Dendritic cell treated with granulocyte-macrophage colony-stimulating factor and Interleukin-4, amounts not matched to agents 40 ng/mL and 50 ng/mL, for 4 days (primary cell): ENCODE measurements at regions of chr3 and their contacts with region 1.

Region 1: GRCh38 chr3:33636125-33636850 is 81.8 kb downstream of the CLASP2 start:
- H3K4me3 Mint-ChIP-seq: no peak overlapping the region
- H3K27ac Mint-ChIP-seq: no peak overlapping the region
- H3K4me1 Mint-ChIP-seq: no peaks in the 10 kb centered on the region
- H3K27me3 Mint-ChIP-seq: no peaks in the 10 kb centered on the region

Region 2: DNA sequence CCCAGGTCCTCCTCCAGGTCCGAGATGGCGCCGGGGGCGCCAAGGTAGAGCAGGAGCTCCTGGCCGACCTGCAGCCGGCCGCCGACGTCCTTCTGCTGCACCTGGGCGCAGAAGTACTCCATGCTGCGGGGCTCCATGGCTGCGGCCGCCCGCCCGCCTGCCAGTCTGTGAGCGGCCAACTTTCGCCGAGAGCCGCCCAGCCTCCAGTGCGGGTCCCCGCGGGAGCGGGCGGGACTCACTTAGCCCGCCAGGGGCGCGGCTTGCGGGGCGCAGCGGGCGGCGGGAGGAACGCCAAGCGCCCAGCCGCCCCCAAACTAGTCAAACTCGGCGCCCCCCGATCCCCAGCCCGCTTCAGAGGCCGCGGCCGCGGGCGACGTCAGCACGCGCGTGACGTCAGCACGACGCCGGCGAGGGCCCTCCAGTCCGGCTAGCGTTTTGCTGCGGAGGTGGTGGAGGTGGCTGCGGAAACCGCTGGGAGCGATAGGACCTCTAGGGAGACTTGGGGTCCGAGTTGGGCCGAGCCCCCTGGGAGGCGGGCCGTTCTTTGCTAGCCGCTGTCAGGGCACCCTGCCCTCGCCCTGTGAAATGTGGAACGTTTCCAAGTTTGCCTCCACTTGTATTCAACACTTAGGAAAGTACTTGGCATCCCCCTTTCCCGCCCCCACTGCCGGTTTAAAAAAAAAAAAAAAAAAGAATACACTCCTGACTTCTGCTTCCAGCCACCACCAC is 81.7 kb after region 1 on chr3 and contains the start of gene CLASP2:
- intact Hi-C with region 1: loop called (anchors 5 kb)
- H3K4me3 Mint-ChIP-seq: peak within 1 kb of the TSS; percentile 97
- H3K27ac Mint-ChIP-seq: no peak within 1 kb of the TSS
- H3K4me1 Mint-ChIP-seq: peaks cover 6% of the 10 kb centered on the region
- H3K27me3 Mint-ChIP-seq: no peaks in the 10 kb centered on the region

Region 3: GRCh38 chr3:34106879-34107278 is 470.6 kb after region 1 on chr3:
- intact Hi-C with region 1: no loop called
- H3K4me3 Mint-ChIP-seq: no peak overlapping the region
- H3K27ac Mint-ChIP-seq: no peak overlapping the region
- H3K4me1 Mint-ChIP-seq: peaks cover 9% of the 10 kb centered on the region
- H3K27me3 Mint-ChIP-seq: no peaks in the 10 kb centered on the region